ENCODE measurements at regions of chr10 and their contacts with region 1.

Region 1: GRCh38 chr10:99766302-99766681 is 16.1 kb upstream of the ABCC2 start:
- DNase-seq: peak; percentile 50
- ATAC-seq: peak; percentile 98
- H3K4me3 ChIP-seq: no peak overlapping the region
- H3K27ac ChIP-seq: no peak overlapping the region; the same call in 1 of the 2 replicates
- H3K4me1 ChIP-seq: peaks cover 20% of the 10 kb centered on the region
- H3K27me3 ChIP-seq: no peaks in the 10 kb centered on the region
- CTCF ChIP-seq: no peak
- EP300 ChIP-seq: peak; percentile 49 to 64; a peak in 2 of 4 replicates
- POLR2A ChIP-seq: no peak
- RAD21 ChIP-seq: no peak

Region 2: GRCh38 chr10:99732033-99732912 is 34.0 kb before region 1 on chr10 and contains the starts of genes COX15 and CUTC:
- CTCF ChIA-PET with region 1: no interaction called
- POLR2A ChIA-PET with region 1: interaction called, 5 read pairs
- RAD21 ChIA-PET with region 1: interaction called, 11 read pairs
- SMC1A ChIA-PET with region 1: interaction called, 6 read pairs
- in situ Hi-C with region 1: no loop called
- intact Hi-C with region 1: no loop called
- DNase-seq: peak; percentile 82
- ATAC-seq: peak; percentile 95
- H3K4me3 ChIP-seq: peak within 1 kb of the TSS; percentile 98
- H3K27ac ChIP-seq: peak within 1 kb of the TSS; percentile 89
- H3K4me1 ChIP-seq: peaks cover 5% of the 10 kb centered on the region; the same call in 1 of the 2 replicates
- H3K27me3 ChIP-seq: no peaks in the 10 kb centered on the region
- CTCF ChIP-seq: peak; percentile 25 to 57 (median 48); a peak in 5 of 6 replicates
- EP300 ChIP-seq: no peak
- POLR2A ChIP-seq: peak; percentile 94
- RAD21 ChIP-seq: 0 out of 2 replicates have a peak, but pooled peaks have one; percentile 1
- polyA plus RNA-seq, gene COX15: 46.3 to 50.7 TPM
- polyA plus RNA-seq, gene CUTC: 64.6 to 71.7 TPM

Region 3: GRCh38 chr10:99742701-99743100 is 23.6 kb before region 1 on chr10:
- CTCF ChIA-PET with region 1: interaction called, 3 read pairs
- POLR2A ChIA-PET with region 1: interaction called, 10 read pairs
- RAD21 ChIA-PET with region 1: no interaction called
- SMC1A ChIA-PET with region 1: interaction called, 3 read pairs
- in situ Hi-C with region 1: no loop called
- intact Hi-C with region 1: no loop called
- DNase-seq: no peak
- ATAC-seq: no peak
- H3K4me3 ChIP-seq: no peak overlapping the region
- H3K27ac ChIP-seq: no peak overlapping the region
- H3K4me1 ChIP-seq: no peaks in the 10 kb centered on the region
- H3K27me3 ChIP-seq: no peaks in the 10 kb centered on the region
- CTCF ChIP-seq: no peak
- EP300 ChIP-seq: no peak
- POLR2A ChIP-seq: no peak
- RAD21 ChIP-seq: no peak

Measured in GM12878 (cell line).